AG04449 (cell line): ENCODE measurements at regions of chr2 and their contacts with region 1.

Region 1: DNA sequence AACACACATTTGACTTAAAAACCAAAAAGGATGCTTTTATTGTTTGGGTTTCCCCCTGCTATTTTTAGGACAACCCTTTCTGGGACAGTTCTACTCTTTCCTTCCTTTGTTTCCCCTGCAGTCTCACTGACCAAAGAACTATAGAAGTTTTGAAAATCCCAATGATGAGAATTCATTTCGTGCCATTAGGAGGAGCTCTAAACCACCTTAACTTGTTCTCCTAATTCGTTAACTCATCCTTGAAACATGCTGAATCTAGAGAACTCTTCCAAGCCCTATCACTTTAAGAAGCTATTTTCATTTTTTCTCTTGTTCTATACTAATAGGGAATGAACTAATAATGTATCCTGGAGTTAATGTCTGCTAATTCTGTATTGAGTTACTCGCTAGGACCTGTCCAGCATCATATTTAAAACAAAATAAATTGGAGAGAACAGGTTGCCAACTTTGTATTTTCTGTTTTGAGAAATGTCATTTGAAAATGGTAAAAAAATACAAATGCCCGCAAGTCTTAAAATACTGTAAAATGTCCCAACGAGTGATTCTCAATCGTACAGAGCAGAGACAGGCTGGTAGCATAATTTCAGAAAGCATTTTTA is 62.9 kb downstream of the AFTPH start:
- DNase-seq: peak; percentile 17
- H3K4me3 ChIP-seq: no peak overlapping the region
- CTCF ChIP-seq: peak; percentile 62

Region 2: DNA sequence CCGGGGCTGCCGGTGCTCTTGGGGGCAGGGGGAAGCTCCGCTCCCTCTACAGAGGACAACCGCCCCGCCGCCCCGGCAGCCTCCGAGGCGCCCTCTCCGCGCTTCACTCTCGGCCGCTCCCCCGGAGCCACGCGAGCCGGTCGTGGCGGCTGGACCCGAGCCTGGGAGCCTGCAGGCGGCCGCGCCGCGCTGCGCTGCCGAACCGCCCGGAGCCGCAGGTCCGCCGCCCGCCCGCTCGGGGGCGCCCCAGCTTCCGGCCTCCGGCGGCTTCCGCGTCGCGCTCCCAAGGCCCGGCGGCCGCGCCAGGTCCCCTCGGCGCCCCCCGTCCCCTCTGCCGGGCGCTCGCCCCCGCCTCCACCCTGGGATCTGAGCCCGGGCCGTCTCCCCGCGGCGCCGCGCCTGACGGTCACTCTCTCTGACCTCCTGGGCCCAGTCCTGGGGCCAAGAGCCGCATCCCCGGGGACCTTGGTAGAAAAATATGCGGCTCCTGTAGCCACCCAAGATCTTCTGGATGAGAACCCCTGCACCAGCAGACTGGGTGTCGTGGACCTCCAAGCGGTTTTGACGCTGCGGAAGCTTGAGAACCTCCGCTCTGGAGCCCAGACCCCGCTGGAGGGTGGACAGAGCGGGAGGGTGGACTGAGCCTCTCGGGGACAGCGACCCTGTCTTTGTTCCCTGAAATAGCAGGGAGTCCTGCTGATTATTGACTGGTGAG is 22.4 kb after region 1 on chr2:
- CTCF ChIA-PET with region 1: interaction called, 16 read pairs
- POLR2A ChIA-PET with region 1: no interaction called
- DNase-seq: no peak
- H3K4me3 ChIP-seq: no peak overlapping the region; the same call in 1 of the 2 replicates
- CTCF ChIP-seq: peak; percentile 14

Region 3: GRCh38 chr2:64635976-64636911 is 49.3 kb after region 1 on chr2:
- CTCF ChIA-PET with region 1: interaction called, 13 read pairs
- POLR2A ChIA-PET with region 1: no interaction called
- DNase-seq: no peak
- H3K4me3 ChIP-seq: no peak overlapping the region
- CTCF ChIP-seq: no peak

Region 4: DNA sequence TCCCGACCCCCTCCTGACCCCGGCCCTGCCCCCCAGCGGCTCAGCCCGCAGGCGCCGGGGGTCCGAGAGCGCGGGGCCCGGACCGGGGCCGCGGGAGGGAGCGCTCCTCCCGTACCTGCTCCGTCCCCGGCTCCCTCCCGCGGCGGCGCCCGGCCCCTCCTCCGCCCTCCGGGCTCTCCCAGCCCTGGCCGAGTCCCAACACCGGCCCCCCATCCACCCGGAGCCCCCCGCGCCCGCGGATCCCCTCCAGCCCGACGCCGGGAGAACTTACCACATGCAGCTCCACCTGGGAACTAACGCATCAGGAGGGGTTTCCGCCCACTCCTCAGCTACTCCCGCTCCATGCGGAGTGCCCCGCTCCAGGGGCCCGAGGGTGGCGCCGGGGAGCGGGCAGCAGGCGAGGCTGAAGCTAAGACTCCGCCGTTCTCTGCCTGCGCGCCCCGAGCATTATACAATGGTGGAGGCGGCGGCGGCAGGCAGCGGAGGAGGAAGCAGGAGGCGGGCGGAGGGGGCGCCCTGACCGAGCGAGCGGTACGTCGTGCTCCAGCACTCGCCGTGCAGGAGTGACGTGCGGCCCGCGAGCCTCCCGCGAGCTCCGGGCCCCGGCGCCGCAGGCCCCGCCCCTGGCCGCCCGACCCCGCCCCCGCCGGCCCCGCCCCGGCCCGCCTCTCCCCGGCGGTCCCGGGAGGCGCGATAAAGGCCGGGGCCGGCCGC is 66.5 kb after region 1 on chr2 and contains the start of gene SERTAD2:
- CTCF ChIA-PET with region 1: interaction called, 39 read pairs
- POLR2A ChIA-PET with region 1: no interaction called
- DNase-seq: no peak
- H3K4me3 ChIP-seq: peak within 1 kb of the TSS; percentile 77
- CTCF ChIP-seq: no peak

Region 5: GRCh38 chr2:64865073-64865830 is 278.3 kb after region 1 on chr2:
- CTCF ChIA-PET with region 1: interaction called, 66 read pairs
- POLR2A ChIA-PET with region 1: no interaction called
- DNase-seq: no peak
- H3K4me3 ChIP-seq: peak overlapping the region; percentile 54
- CTCF ChIP-seq: peak; percentile 46

Region 6: DNA sequence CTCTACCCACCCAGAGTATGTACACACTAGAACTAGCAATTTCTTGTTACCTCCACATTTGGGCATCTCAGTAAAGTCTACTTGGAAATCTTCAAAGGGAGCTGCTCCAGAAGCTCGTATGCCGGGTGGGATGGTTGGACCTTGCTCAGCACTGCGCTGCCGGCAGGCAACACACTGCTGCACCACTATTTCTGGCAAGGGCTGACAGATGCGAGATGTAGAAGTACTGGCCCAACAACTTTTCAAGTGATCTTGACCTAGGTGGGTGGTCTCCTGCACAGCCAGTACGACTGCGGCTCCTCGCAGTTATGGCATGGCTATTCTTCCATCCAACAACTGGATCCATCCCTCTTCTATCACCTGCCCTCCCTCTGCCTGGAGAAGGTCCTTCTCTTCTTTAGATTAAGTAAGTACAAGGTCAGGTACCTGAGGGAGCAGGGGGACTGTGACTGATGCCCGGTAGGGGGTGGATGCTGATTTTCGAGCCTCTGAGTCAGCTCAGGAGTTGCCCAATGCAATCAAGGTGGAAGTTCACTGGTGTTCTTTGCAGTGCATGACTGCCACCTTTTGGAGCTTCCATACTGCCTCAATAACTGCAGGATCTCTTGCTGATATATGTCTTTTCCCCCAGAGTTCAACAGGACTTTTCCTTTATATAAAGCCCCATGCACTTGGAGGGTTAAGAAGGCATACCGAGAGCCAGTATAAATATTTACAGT is 301.8 kb after region 1 on chr2:
- CTCF ChIA-PET with region 1: interaction called, 13 read pairs
- POLR2A ChIA-PET with region 1: no interaction called
- DNase-seq: no peak
- H3K4me3 ChIP-seq: no peak overlapping the region
- CTCF ChIP-seq: peak; percentile 42